ENCODE measurements at regions of chr12 and their contacts with region 1.

Region 1: DNA sequence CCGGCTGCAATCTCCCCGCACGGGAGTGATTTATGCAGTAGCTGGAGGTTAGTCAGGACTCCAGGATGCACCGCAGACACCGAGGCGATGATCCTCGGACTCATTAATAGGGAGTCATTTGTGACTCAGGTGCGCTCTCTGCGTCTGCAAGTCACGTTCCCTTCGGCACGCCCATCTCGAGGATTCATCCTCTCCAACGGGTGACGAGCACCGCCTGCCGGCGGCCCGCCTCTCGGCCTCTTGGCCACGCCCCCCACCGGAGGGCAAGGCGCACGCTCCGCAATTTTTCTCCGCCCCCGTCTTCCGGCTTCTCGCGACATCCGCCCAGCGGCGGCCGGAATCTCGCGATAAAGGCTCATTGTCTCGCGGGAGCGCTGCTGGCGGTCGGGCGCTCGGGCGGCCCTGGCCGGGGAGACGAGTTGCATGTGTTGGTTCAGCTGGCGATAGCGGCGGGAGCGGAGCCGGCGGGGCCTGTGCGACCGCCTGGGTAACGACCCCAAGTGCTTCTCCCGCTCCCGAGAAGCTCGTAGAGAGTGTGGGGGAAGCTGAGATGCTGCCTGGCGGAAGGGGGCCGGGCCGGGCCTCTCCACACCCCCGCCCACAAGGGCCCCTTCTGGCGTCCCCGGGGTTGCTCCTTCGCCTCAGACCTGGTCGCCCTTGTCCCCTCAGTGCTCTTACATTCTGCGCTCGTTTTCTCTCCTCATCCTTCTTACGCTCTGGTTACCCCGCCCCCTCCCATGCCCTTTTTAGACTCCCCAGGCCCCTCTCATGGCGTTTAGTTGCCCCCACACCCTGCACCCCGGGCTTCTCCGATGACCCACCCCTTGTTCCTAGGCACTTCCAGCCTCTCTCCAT is at the start of gene DENR:
- DNase-seq: peak; percentile 92 to 98 (median 96)
- H3K4me3 ChIP-seq: peak within 1 kb of the TSS; percentile 66 to 99 (median 94)
- H3K27ac ChIP-seq: peak within 1 kb of the TSS in 58 of 59 donors; percentile 36 to 97 (median 83)
- H3K27me3 ChIP-seq: no peaks in the 10 kb centered on the region
- CTCF ChIP-seq: peak; percentile 85 to 99 (median 96)
- total RNA-seq, gene DENR: 23.3 to 54.9 (median 38.1) TPM

Region 2: DNA sequence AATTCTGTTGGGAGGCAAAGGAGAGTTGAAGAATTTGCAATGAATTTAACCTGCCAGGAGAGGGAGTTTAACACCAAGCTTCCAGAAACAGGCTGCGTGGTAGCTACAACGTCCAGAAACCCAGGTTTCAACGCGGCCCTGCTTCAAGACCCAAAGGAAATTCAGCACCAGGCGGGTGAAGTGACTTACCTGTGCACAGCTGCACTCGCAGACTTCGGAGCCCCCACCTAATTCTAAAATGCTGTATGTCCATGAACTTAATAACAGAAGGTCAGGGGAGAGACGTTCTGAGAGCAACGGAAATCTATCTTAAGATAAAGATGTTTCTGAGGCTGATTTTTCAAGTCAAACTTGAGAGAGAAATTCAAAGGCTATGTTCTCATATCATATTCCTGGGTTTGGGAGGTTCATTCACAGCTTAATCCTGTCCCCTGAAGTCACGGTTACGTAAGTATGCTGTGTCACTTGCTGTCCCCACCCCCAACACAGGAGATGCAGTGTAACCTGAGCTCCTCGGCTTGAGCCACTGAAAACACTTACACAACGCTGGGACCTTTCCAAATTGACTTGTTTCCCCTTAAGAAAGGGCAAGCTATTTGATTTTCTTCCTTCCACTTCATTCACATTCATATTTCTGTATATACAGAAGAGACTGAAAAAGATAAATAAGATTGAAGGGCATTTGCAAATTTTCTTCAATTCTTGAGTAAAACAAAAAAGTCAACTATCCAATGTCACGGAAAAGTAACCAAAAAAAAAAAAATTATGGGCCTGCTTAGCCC is 352.9 kb before region 1 on chr12:
- intact Hi-C with region 1: loop called in 1 of 2 experiments (anchors 5 kb)
- DNase-seq: peak in 9 of 10 donors; percentile 40 to 68 (median 57)
- H3K4me3 ChIP-seq: peak overlapping the region in 29 of 59 donors; percentile 1 to 38 (median 14)
- H3K27ac ChIP-seq: peak overlapping the region in 58 of 59 donors; percentile 41 to 97 (median 84)
- H3K27me3 ChIP-seq: no peaks in the 10 kb centered on the region
- CTCF ChIP-seq: peak; percentile 25 to 87 (median 71)

Region 3: GRCh38 chr12:122635471-122635870 is 117.2 kb before region 1 on chr12:
- intact Hi-C with region 1: loop called (anchors 5 kb)
- DNase-seq: no peak
- H3K4me3 ChIP-seq: no peak overlapping the region
- H3K27ac ChIP-seq: peak overlapping the region in 1 of 59 donors; percentile 21
- H3K27me3 ChIP-seq: no peaks in the 10 kb centered on the region
- CTCF ChIP-seq: no peak

Region 4: DNA sequence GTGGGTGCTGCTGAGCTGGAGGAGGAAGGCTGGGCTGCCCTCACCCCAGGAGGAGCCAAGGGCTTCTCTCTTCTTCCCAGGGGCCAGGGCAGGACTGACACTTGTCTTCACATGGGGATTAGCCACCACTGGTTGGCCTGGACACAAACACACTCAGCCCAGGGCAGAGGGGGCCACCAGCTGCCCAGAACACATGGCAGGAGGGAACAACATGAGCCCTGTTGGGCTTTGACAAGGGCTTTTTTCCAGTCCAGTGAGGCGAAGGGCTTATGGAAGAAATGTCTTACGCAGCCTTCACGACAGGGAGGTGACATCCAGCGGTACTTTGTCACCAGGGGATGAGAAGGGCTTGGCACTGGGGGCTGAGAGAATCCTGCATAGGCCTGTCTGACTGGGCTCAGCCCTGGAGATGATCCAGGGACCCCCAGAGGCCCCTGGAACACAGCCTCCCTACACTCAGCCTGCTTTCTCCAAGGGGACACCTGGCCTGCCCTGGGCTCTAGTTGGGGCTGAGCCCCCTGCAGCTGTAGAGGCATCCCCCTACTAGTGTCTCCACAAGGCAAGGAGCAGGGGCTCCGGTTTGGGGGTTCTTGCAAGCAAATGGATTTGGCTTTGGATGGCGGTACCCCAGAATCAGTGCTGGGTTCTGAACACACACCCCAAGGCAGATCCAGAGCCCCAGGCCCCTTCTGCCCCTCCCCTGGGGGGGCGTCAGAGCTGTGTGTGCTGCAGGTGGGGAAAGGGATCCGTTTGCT is 246.7 kb after region 1 on chr12:
- intact Hi-C with region 1: no loop called
- DNase-seq: peak in 1 of 10 donors; percentile 52
- H3K4me3 ChIP-seq: no peak overlapping the region
- H3K27ac ChIP-seq: peak overlapping the region in 29 of 59 donors; percentile 3 to 72 (median 38)
- H3K27me3 ChIP-seq: no peaks in the 10 kb centered on the region
- CTCF ChIP-seq: no peak